ENCODE measurements at regions of chr19 and their contacts with region 1.

Region 1: DNA sequence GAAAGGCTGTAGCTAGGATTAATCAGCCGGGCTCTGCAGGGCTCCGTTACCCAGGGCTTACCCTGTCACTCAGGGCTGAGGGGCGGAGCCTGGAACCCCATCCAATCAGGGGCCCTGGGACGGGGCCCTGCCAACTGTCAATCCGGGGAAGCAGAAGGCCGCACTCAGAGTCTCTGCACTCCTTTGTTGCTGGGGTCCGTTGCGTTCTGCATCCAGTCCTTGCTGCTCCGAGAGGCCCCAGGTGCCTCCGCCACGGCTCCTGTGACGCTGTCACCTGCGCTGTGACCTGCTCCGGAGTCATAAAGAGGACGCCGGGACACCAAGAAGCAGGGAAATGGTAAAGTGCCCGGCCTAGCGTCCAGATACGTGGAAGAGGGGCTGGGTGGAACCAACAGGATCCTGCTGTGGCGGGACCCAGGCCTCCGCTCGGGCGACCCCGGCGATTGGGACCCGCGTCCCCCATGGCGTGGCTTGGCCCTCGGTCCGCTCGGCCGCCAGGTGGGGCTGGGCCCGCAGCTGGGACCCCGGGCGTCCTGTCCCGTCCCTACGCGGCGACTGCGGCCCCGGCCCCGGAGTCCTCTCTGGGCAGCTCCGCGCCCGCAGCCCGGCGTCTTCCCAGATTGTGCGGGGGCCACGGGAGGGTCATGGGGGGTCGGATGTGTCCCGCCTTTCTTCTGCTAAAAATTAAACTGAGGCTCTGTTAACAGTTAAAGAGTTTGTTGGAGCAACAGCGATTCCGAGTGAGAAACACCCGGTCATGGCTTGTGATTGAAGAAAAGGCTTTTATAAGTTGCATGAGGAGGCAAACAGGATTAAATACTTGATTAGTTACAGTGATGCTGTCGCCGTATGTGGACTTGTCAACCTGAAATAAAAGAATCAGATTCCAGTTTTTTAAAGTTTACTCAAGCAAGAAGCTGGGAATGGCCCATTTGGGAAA is at the start of gene ZNF491:
- DNase-seq: peak; percentile 73 to 95
- H3K4me3 ChIP-seq: peak within 1 kb of the TSS; percentile 71 to 72
- H3K27ac ChIP-seq: peak within 1 kb of the TSS; percentile 60 to 80
- H3K4me1 ChIP-seq: peaks cover 6 to 8% of the 10 kb centered on the region in 2 donors
- H3K27me3 ChIP-seq: no peaks in the 10 kb centered on the region
- CTCF ChIP-seq: peak in 2 of 3 experiments; percentile 11 to 27
- total RNA-seq, gene ZNF491: not detected

Region 2: GRCh38 chr19:11814029-11814699 is 15.5 kb after region 1 on chr19 and contains the start of gene ZNF440:
- intact Hi-C with region 1: loop called (anchors 1 kb)
- DNase-seq: peak; percentile 85 to 98
- H3K4me3 ChIP-seq: peak within 1 kb of the TSS; percentile 84 to 90
- H3K27ac ChIP-seq: peak within 1 kb of the TSS; percentile 85 to 93
- H3K4me1 ChIP-seq: peaks cover 0 to 3% of the 10 kb centered on the region in 2 donors
- H3K27me3 ChIP-seq: no peaks in the 10 kb centered on the region
- CTCF ChIP-seq: no peak
- total RNA-seq, gene ZNF440: 1.1 TPM

Region 3: DNA sequence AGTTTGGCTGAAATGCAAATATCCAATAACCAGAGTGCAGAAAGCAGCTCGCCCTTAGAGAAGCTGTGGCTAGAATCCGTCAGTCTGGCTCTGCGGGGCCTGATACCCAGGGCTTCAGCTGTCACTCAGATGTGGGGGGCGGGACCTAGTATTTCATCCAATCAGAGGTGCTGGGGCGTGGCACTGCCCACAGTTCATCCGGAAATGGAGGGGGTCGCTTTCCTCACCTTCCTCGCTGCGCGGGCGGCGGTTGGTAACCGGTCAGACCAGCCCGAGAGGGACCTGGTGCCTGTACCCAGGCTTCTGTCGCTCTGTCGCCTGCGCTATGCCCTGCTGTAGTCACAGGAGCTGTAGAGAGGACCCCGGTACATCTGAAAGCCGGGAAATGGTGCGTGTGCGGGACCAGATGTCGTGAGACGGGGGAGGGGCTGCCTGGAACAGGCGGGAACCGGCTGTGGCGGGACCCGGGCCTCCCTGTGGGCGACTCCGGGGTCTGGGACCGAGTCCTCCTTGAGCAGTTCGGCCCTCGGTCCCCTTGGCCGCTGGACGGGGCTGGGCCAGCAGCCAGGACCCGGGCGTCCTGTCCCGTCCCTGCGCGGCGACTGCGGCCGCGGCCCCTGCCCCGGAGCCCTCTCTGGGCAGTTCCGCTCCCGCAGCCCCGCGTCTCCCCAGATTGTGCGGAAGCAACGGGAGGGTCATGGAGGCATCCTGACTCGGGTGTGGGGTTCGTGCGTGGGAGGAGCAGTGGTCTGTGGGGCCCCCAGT is 126.4 kb after region 1 on chr19 and contains the start of gene ZNF700:
- intact Hi-C with region 1: loop called (anchors 2 kb)
- DNase-seq: peak; percentile 77 to 97
- H3K4me3 ChIP-seq: peak within 1 kb of the TSS; percentile 84 to 88
- H3K27ac ChIP-seq: peak within 1 kb of the TSS; percentile 92 to 93
- H3K4me1 ChIP-seq: peaks cover 3 to 10% of the 10 kb centered on the region in 2 donors
- H3K27me3 ChIP-seq: no peaks in the 10 kb centered on the region
- CTCF ChIP-seq: no peak
- total RNA-seq, gene ZNF700: 4.4 TPM

Region 4: DNA sequence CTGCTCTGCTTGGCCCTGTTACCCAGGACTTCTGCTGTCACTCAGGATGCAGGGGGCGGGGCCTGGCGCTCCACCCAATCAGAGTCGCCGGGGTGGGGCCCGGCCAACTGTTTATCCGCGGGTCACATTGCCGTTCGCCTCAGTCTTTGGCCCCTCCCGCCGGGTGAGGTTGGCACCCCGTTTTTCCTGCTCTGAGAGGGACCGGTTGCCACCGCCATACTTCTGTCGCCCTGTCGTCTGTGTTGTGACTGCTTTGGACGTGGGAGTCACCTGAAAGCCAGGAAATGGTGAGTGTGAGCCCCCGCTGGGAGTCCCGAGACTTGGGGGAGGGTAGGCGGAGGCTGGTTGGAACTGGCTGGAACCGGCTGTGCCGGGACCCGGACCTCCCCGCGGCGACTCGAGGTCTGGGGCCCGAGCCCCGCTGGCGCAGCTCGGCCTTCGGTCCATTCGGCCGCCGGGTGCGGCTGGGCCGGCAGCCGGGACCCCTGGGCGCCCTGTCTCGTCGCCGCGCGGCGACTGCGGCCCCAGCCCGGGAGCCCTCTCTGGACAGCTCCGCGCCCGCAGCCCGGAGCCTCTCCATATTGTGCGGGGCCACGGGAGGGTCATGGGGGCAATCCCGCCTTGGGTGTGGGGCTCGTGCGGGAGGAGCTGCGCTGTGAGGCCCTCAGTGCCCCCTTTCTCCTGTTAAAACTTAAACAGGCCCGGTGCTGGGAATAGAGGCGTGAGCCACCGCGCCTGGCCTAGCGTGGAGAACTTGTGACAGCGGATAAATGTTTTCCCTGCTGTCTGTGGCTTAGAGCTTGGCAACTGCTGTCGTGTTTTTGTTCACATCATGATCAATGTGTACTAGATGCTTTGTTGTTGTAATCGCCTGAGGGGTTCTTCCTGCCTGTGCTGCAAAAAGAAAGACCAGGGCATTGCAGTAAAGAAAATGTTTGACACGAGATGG is 266.2 kb after region 1 on chr19 and contains the start of gene ZNF844:
- intact Hi-C with region 1: loop called (anchors 5 kb)
- DNase-seq: peak; percentile 95 to 98
- H3K4me3 ChIP-seq: peak within 1 kb of the TSS; percentile 84 to 85
- H3K27ac ChIP-seq: peak within 1 kb of the TSS; percentile 87 to 93
- H3K4me1 ChIP-seq: peaks cover 3 to 7% of the 10 kb centered on the region in 2 donors
- H3K27me3 ChIP-seq: no peaks in the 10 kb centered on the region
- CTCF ChIP-seq: no peak
- total RNA-seq, gene ZNF844: 8.0 TPM